G401 (cell line): ENCODE measurements at regions of chr2 and their contacts with region 1.

Region 1: DNA sequence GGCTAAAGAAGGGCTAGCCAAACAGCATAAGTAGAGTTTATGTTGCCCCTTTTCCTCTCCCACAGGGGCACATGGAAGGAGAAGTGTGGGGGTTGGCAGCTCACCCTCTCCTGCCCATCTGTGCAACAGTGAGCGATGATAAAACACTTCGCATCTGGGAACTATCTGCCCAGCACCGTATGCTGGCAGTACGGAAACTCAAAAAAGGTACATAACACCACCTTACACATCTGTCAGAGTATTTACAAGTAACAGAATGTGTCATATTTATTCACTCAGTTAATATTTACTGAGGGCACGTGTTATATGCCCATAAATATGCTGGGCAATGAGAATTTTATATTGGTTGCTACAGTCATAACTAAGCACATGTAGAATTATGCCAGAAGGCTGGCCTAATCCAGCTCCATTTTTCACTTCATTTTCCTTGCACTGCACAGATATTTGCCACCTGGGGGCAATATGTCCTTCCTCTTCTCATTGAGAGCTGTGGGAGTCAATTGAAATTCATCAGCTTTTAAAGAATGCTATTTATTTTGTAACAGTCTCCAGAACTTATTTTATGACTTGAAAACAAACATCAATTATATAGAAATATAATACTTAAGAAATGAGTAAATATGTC is 150.6 kb downstream of the RTN4 start:
- DNase-seq: peak; percentile 84

Region 2: GRCh38 chr2:55168221-55169154 is 268.8 kb after region 1 on chr2:
- in situ Hi-C with region 1: loop called (anchors 25 kb)
- DNase-seq: peak; percentile 85

Region 3: DNA sequence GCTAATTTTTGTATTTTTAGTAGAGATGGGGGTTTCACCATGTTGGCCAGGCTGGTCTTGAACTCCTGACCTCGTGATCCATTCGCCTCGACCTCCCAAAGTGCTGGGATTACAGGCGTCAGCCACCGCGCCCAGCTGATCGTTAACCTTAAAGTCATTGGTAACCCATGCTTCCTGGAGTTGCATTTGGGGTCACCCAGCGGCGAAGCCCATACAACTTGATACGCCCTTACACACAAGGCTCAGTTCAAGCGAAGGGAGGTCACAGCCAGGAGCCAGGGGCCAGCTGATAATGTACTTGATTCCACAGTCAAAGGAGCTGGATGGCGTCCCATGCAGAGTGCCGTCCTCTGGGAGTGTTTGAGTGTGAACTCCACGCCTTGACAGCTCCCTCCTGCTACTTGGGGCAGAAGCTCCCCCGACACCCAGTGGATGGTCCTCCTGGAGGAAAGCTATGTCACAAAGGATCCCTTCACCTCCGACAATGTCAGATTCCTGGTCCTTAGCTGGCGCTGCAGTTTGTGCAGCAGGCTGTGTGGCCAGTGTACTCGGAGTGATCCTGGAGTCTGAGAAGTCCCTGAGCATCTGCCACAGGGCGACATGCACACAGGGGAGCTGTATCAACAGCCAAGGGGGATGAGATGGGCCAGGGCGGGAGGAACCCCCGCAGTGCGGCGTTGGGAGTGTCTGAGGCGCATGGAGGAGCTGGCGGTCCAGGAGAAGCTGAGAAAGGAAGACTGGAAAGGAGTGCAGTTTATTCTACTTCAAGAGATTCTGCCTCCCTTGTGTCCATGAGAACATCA is 324.5 kb after region 1 on chr2:
- in situ Hi-C with region 1: no loop called
- DNase-seq: no peak